Activated B cell treated with CpG ODN at 0.5 μM for 24 hours (primary cell): ENCODE measurements at regions of chr14 and their contacts with region 1.

Region 1: DNA sequence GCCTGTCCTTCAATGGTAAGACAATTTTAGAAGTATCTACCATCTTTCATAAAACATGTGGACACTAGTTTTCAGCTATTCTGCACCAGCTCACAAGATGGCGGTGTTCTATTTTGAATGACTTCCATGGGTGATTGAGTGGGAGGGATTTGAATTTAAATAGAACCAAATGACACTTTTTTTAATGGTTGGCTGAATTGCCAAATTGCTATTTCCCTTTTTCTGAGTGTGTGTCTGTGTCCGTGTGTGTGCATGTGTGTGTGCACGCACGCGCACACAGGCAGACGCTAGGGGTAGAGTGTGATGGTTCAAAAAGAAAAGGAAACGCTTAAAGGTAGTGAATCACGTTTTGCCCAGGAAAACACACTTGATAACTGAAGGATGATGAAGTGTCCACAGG is 362.6 kb downstream of the DAD1 start:
- DNase-seq: no peak
- ATAC-seq: peak; percentile 85
- H3K4me3 Mint-ChIP-seq: peak overlapping the region; percentile 64
- H3K27ac Mint-ChIP-seq: peak overlapping the region; percentile 81
- H3K4me1 Mint-ChIP-seq: peaks cover 53% of the 10 kb centered on the region
- H3K27me3 Mint-ChIP-seq: peaks cover 8% of the 10 kb centered on the region
- CTCF ChIP-seq: no peak

Region 2: GRCh38 chr14:22200977-22201605 is 25.3 kb before region 1 on chr14:
- CTCF ChIA-PET with region 1: interaction called, 11 read pairs
- POLR2A ChIA-PET with region 1: no interaction called
- intact Hi-C with region 1: no loop called
- DNase-seq: no peak
- ATAC-seq: peak; percentile 72
- H3K4me3 Mint-ChIP-seq: no peak overlapping the region
- H3K27ac Mint-ChIP-seq: no peak overlapping the region
- H3K4me1 Mint-ChIP-seq: no peaks in the 10 kb centered on the region
- H3K27me3 Mint-ChIP-seq: peaks cover 15% of the 10 kb centered on the region
- CTCF ChIP-seq: no peak

Region 3: GRCh38 chr14:22282417-22282816 is 56.0 kb after region 1 on chr14:
- CTCF ChIA-PET with region 1: interaction called, 3 read pairs
- POLR2A ChIA-PET with region 1: no interaction called
- intact Hi-C with region 1: loop called (anchors 2 kb)
- DNase-seq: no peak
- ATAC-seq: peak; percentile 75
- H3K4me3 Mint-ChIP-seq: peak overlapping the region; percentile 46
- H3K27ac Mint-ChIP-seq: no peak overlapping the region
- H3K4me1 Mint-ChIP-seq: peaks cover 29% of the 10 kb centered on the region
- H3K27me3 Mint-ChIP-seq: no peaks in the 10 kb centered on the region
- CTCF ChIP-seq: no peak

Region 4: DNA sequence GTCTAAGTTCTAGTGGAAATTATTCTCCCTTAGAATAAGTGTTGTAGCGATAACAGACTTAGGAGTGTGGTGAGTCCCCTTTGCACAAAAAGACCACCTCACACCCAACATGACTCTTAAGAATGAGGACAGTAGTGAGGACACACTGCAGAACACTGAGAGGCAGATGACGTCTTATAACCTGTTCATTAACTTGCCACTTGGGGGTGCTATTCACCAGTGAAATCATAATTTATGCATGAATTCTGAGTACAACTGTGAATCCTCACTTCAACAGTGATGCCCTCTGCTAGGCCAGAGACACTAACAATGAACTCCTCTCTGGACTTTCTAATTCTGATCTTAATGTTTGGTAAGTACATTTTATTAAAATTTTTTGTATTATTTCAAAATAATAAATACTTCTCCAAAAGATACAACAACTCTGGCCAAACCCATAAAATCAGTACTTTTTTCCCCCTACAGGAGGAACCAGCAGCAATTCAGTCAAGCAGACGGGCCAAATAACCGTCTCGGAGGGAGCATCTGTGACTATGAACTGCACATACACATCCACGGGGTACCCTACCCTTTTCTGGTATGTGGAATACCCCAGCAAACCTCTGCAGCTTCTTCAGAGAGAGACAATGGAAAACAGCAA is 87.9 kb after region 1 on chr14:
- CTCF ChIA-PET with region 1: interaction called, 13 read pairs
- POLR2A ChIA-PET with region 1: no interaction called
- intact Hi-C with region 1: loop called (anchors 1 kb)
- DNase-seq: no peak
- ATAC-seq: peak; percentile 95
- H3K4me3 Mint-ChIP-seq: no peak overlapping the region
- H3K27ac Mint-ChIP-seq: no peak overlapping the region
- H3K4me1 Mint-ChIP-seq: no peaks in the 10 kb centered on the region
- H3K27me3 Mint-ChIP-seq: no peaks in the 10 kb centered on the region
- CTCF ChIP-seq: no peak

Region 5: DNA sequence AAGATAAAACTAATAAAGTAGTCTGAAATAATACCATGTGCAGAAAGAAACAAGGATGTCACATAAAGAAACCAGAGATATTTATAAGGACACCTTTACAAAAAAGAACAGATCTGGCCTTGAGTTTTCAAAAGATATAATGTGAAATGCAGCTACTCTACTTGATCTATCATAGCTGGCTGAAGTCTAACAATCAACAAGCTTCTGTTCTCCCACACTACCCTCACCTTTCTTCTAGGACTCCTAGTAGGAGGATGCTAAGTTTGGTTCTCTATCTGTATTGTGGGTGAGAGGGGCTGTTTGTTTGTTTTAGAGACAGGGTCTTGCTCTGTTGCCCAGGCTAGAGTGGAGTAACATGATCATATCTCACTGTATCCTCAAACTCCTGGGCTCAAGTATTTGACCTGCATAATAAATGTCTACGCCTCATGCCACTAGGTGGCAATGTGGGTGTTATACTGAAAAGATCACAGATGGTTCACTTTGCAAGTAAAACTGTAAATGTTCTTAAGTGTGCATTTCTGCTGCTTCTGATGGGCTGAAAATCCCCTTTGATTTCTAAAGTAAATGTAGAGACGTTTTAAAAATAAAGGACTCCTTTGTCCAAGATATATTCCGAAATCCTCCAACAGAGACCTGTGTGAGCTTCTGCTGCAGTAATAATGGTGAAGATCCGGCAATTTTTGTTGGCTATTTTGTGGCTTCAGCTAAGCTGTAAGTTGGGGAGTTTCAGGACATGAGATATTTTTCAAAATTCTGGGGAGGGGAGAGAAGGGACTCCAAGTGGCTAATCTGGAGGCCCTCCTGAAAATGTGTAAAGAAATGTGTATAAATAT is 93.4 kb after region 1 on chr14:
- CTCF ChIA-PET with region 1: interaction called, 13 read pairs
- POLR2A ChIA-PET with region 1: no interaction called
- intact Hi-C with region 1: loop called (anchors 1 kb)
- DNase-seq: no peak
- ATAC-seq: peak; percentile 77
- H3K4me3 Mint-ChIP-seq: no peak overlapping the region
- H3K27ac Mint-ChIP-seq: no peak overlapping the region
- H3K4me1 Mint-ChIP-seq: no peaks in the 10 kb centered on the region
- H3K27me3 Mint-ChIP-seq: peaks cover 4% of the 10 kb centered on the region
- CTCF ChIP-seq: no peak

Region 6: GRCh38 chr14:22375321-22375930 is 149.0 kb after region 1 on chr14:
- CTCF ChIA-PET with region 1: interaction called, 19 read pairs
- POLR2A ChIA-PET with region 1: no interaction called
- intact Hi-C with region 1: loop called (anchors 1 kb)
- DNase-seq: no peak
- ATAC-seq: peak; percentile 65
- H3K4me3 Mint-ChIP-seq: no peak overlapping the region
- H3K27ac Mint-ChIP-seq: no peak overlapping the region
- H3K4me1 Mint-ChIP-seq: peaks cover 5% of the 10 kb centered on the region
- H3K27me3 Mint-ChIP-seq: no peaks in the 10 kb centered on the region
- CTCF ChIP-seq: peak; percentile 46

Region 7: DNA sequence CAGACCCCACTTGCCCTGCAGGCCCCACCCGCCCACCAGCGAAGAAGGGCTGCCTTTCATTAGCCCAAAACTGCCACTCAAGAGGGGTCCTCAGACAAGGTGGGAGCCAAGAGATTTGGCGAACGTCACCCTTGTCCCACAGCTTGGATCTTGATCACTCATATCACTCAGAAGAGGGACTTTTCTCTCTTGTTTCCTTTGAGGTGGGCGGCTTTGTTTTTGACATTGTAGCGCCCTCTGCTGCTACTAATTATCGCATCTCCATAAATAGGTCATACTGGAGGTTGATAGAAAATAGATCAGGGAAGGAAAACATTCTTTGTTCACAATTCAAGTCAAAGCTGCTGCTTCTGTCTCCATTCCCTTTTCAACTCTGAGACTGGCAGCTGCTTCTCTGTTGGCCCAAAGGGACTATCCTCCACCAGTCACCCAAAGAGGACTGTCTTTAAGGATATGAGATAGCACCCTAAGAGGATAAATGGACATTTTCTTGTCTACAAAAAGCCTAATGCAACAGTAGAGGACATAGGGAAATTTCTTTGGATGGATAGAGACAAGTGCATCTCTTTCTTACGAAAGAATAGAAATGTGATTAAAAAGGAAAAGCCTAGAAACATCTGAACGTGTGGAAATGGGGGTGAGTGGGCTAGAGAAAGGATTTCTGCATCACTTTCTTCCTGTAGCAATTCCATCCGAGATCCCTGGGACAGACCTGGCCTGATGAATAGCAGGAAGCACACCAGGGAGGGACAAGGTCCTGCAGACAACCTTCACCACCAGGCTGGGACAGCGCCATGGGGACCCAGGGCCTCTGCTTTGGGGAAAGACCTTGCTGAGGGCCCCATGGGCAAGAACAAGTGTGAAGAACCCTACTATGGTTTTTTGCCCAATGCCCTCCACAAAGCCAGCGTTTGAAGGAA is 246.8 kb after region 1 on chr14:
- CTCF ChIA-PET with region 1: no interaction called
- POLR2A ChIA-PET with region 1: interaction called, 8 read pairs
- intact Hi-C with region 1: loop called (anchors 1 kb)
- DNase-seq: no peak
- ATAC-seq: peak; percentile 64
- H3K4me3 Mint-ChIP-seq: peak overlapping the region; percentile 3
- H3K27ac Mint-ChIP-seq: peak overlapping the region; percentile 65
- H3K4me1 Mint-ChIP-seq: peaks cover 89% of the 10 kb centered on the region
- H3K27me3 Mint-ChIP-seq: no peaks in the 10 kb centered on the region
- CTCF ChIP-seq: peak; percentile 40